Calu3 (cell line): ENCODE measurements at regions of chr15 and their contacts with region 1.

Region 1: DNA sequence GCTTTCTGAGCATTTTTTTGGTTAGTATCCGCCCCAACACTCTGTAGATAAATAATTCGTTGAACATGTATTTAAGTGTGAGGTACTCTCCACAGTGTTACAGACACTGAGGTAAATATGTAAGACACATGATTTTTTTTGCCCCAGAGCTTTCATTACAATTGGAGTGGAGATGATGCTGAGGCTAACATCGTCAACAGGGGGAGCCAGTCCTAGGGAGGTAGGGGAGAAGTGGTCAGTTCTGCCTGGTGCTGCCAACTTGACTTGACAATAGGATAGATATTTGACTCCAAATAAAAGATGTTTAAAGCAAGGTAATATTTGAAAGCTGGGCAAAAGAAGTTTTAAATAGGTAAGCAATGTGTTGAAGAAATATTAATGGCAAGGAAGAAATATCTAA is 295.7 kb downstream of the UNC13C start:
- DNase-seq: peak; percentile 5
- H3K4me3 Mint-ChIP-seq: no peak overlapping the region
- H3K27ac Mint-ChIP-seq: no peak overlapping the region
- H3K4me1 Mint-ChIP-seq: no peaks in the 10 kb centered on the region
- H3K27me3 Mint-ChIP-seq: no peaks in the 10 kb centered on the region
- CTCF ChIP-seq: no peak

Region 2: DNA sequence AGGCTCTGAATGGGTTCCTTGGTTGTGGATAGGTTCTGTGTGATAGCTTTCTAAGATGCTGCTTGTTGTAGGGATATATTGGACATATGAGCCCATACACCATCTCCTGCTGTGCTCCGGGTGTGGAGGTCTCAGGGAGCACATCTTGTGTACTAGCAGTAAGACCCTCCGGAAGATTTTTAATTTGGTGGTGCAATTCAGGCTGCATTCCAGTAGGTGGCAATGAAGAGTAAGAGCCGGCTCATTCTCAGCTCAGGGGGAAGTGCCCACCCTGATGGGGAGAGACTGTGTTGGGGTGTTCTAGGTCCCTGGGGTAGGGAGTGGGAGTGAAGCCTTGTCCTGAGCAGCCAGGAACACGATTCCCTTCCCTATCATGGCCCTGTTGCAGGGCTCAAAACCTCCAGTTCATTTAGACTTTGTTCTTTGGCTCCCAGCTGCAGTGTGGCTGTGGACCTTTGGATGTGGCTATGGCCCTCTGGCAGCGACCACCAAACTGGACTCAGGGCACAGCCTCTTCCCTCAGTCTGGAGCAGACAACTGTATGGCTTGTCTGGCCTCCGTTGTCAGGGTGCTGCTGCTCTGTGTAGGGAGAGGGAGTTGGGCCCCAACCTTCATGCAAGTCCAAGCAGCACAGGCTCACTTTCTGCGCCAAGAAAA is 191.0 kb before region 1 on chr15:
- CTCF ChIA-PET with region 1: no interaction called
- intact Hi-C with region 1: loop called (anchors 10 kb)
- DNase-seq: peak; percentile 20
- H3K4me3 Mint-ChIP-seq: no peak overlapping the region
- H3K27ac Mint-ChIP-seq: no peak overlapping the region
- H3K4me1 Mint-ChIP-seq: no peaks in the 10 kb centered on the region
- H3K27me3 Mint-ChIP-seq: no peaks in the 10 kb centered on the region
- CTCF ChIP-seq: peak; percentile 87

Region 3: GRCh38 chr15:54298396-54298795 is 24.5 kb after region 1 on chr15:
- CTCF ChIA-PET with region 1: no interaction called
- intact Hi-C with region 1: no loop called
- DNase-seq: no peak
- H3K4me3 Mint-ChIP-seq: no peak overlapping the region
- H3K27ac Mint-ChIP-seq: no peak overlapping the region
- H3K4me1 Mint-ChIP-seq: no peaks in the 10 kb centered on the region
- H3K27me3 Mint-ChIP-seq: no peaks in the 10 kb centered on the region
- CTCF ChIP-seq: no peak